ENCODE measurements at regions of chr17 and their contacts with region 1.

Region 1: DNA sequence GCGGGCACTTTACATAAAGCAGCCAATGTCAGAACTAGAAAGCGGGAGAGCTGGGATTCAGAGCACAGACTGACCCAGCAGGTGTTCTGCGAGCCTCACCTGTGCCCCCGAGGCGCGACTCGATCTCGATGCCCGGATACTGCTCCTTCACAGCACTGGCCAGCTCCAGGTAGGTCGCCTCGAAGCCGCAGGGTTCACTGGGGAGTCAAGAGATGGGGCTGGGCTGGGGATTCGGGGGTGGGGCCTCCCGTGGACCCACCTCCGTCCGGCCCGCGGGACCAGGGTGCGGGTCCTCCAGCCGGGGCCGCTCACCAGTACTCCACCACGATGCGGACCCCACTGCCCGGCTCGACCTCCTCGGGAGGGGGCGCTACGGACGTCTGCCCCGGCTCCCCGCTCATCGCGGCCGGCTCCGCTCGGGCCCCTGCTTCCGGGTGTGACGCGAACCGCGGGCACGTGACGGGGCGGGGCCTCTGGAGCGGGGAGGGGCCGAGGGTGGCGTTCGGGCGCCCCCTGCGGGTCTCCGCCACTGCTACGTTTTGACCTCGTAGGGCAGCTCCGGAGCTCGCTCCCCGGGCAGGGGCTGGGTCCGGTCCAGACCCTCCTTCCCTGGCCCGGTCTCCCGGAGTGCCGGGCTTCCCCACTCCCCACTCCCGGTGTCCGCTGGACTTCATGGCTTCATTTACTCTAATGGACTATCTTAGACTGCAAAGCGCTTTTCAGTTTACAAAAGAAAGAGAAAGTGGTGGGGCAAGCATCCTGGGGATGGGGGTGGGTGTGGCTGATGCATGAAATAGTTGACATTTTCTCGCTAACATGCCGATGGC is at the start of gene MIEN1:
- DNase-seq: peak; percentile 95
- ATAC-seq: peak; percentile 94
- H3K4me3 ChIP-seq: peak within 1 kb of the TSS; percentile 63 to 100 (median 78)
- H3K4me3 Mint-ChIP-seq: peak within 1 kb of the TSS; percentile 93
- H3K27ac ChIP-seq: peak within 1 kb of the TSS; percentile 82 to 96
- H3K27ac Mint-ChIP-seq: peak within 1 kb of the TSS; percentile 94
- H3K4me1 ChIP-seq: peaks cover 11 to 17% of the 10 kb centered on the region in 2 donors
- H3K4me1 Mint-ChIP-seq: peaks cover 28% of the 10 kb centered on the region
- H3K27me3 ChIP-seq: no peaks in the 10 kb centered on the region
- H3K27me3 Mint-ChIP-seq: no peaks in the 10 kb centered on the region
- CTCF ChIP-seq: peak; percentile 96
- total RNA-seq, gene MIEN1: 37.9 and 41.1 TPM in 2 replicates

Region 2: DNA sequence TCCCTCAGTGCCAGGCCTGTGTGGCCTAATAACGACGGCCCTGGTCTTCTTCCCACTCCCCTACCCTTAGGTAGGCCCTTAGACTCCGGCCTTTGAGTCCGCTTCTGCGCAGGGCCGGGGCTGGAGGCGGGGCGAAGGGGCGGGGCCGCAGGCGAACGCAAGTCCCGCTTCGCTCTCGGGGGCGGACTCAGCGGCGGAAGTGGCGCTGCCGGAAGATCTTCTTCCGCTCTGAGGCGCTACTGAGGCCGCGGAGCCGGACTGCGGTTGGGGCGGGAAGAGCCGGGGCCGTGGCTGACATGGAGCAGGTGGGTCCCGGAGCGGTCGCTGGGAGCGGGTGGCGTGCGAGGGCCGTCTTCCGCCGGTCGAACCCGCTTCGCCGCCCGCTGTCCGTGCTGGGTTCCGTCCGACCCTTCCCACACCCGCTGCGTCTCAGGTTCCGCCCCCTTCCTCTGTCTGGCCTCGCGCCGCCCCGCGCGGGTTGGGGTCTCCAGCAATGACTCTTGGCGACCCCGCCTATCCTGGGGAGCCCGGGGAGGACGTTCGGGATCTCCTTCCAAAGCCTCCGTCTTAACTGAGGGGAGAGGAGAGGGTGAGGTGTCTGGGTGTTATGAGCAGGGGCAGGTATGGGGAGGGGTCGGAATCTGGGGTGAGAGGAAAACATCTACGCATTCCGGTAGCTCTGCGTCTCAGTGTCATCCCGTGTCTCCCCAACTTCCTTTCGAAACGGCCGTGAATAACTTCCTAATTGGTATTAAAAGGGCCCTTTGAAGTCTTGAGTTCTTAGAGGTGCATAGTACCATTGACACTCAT is 93.2 kb before region 1 on chr17 and contains the start of gene STARD3:
- CTCF ChIA-PET with region 1: interaction called, 18 read pairs
- POLR2A ChIA-PET with region 1: no interaction called
- intact Hi-C with region 1: no loop called
- DNase-seq: peak; percentile 93
- ATAC-seq: peak; percentile 92
- H3K4me3 ChIP-seq: peak within 1 kb of the TSS; percentile 76 to 94 (median 82)
- H3K4me3 Mint-ChIP-seq: peak within 1 kb of the TSS; percentile 95
- H3K27ac ChIP-seq: peak within 1 kb of the TSS; percentile 89 to 90
- H3K27ac Mint-ChIP-seq: peak within 1 kb of the TSS; percentile 91
- H3K4me1 ChIP-seq: peaks cover 49 to 63% of the 10 kb centered on the region in 2 donors
- H3K4me1 Mint-ChIP-seq: peaks cover 60% of the 10 kb centered on the region
- H3K27me3 ChIP-seq: peaks cover 0 to 3% (median 0%) of the 10 kb centered on the region in 4 experiments
- H3K27me3 Mint-ChIP-seq: no peaks in the 10 kb centered on the region
- CTCF ChIP-seq: no peak
- total RNA-seq, gene STARD3: 93.1 and 101 TPM in 2 replicates

Region 3: GRCh38 chr17:39668199-39668966 is 61.9 kb before region 1 on chr17 and contains the start of gene PNMT:
- CTCF ChIA-PET with region 1: interaction called, 28 read pairs
- POLR2A ChIA-PET with region 1: interaction called, 7 read pairs
- intact Hi-C with region 1: no loop called
- DNase-seq: peak; percentile 82
- ATAC-seq: peak; percentile 76
- H3K4me3 ChIP-seq: peak within 1 kb of the TSS in 4 of 5 experiments; percentile 28 to 62 (median 53)
- H3K4me3 Mint-ChIP-seq: peak within 1 kb of the TSS; percentile 75
- H3K27ac ChIP-seq: no peak within 1 kb of the TSS
- H3K27ac Mint-ChIP-seq: peak within 1 kb of the TSS; percentile 7
- H3K4me1 ChIP-seq: peaks cover 24 to 36% of the 10 kb centered on the region in 2 donors
- H3K4me1 Mint-ChIP-seq: peaks cover 27% of the 10 kb centered on the region
- H3K27me3 ChIP-seq: peaks cover 0 to 37% (median 7%) of the 10 kb centered on the region in 4 experiments
- H3K27me3 Mint-ChIP-seq: peaks cover 23% of the 10 kb centered on the region
- CTCF ChIP-seq: peak; percentile 79
- total RNA-seq, gene PNMT: 0.39 and 0.76 TPM in 2 replicates

Region 4: GRCh38 chr17:39777534-39778365 is 47.4 kb after region 1 on chr17:
- CTCF ChIA-PET with region 1: interaction called, 13 read pairs
- POLR2A ChIA-PET with region 1: no interaction called
- intact Hi-C with region 1: no loop called
- DNase-seq: peak; percentile 59
- ATAC-seq: peak; percentile 36
- H3K4me3 ChIP-seq: peak overlapping the region; percentile 17 to 86 (median 51)
- H3K4me3 Mint-ChIP-seq: peak overlapping the region; percentile 89
- H3K27ac ChIP-seq: peak overlapping the region; percentile 33 to 86
- H3K27ac Mint-ChIP-seq: peak overlapping the region; percentile 93
- H3K4me1 ChIP-seq: peaks cover 80 to 90% of the 10 kb centered on the region in 2 donors
- H3K4me1 Mint-ChIP-seq: peaks cover 81% of the 10 kb centered on the region
- H3K27me3 ChIP-seq: no peaks in the 10 kb centered on the region
- H3K27me3 Mint-ChIP-seq: no peaks in the 10 kb centered on the region
- CTCF ChIP-seq: no peak

Region 5: DNA sequence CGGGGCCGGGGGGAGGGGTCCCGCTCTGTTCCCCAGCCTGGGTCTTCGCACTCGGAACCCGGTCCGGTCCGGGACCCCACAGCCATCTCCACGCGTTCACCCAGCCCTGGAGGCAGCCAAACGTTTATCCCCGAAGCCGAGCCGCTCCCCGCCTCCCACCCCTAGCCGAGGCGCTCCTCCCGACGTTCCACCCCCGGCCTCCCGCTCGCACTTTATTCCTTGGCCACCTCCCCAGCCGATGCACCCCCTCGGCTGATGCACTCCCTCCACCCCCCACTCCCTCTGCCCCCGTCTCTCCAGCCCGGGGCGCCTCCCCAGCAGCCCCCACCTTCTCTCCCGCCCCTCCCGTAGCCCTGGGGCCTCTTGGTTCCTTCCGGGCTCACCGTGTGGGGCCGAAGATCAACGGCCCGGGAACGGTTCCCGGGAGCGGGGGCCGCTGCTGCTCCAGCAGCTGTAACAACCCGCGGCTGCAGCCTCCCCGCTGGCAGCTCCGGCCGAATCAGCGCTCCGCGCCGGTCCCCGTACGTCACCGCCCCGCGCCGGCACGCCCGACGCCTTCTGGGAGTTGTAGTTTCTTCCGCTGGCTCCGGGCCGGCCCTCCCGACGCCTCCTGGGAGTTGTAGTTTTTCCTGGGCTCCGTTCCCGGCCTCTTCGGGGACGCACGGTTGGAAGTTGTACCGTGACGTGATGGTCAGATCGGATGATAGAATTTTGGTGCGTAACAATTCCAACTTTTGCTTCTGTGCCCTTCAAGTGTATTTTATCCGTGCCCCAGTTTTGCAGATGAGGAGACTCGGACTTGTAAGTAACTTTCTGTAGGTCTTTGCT is 197.0 kb after region 1 on chr17 and contains the starts of genes LRRC3C and ORMDL3:
- CTCF ChIA-PET with region 1: no interaction called
- POLR2A ChIA-PET with region 1: no interaction called
- intact Hi-C with region 1: loop called (anchors 1 kb)
- DNase-seq: peak; percentile 93
- ATAC-seq: peak; percentile 96
- H3K4me3 ChIP-seq: peak within 1 kb of the TSS; percentile 66 to 93 (median 79)
- H3K4me3 Mint-ChIP-seq: peak within 1 kb of the TSS; percentile 92
- H3K27ac ChIP-seq: peak within 1 kb of the TSS; percentile 46 to 73
- H3K27ac Mint-ChIP-seq: peak within 1 kb of the TSS; percentile 87
- H3K4me1 ChIP-seq: peaks cover 33 to 34% of the 10 kb centered on the region in 2 donors
- H3K4me1 Mint-ChIP-seq: peaks cover 36% of the 10 kb centered on the region
- H3K27me3 ChIP-seq: no peaks in the 10 kb centered on the region
- H3K27me3 Mint-ChIP-seq: no peaks in the 10 kb centered on the region
- CTCF ChIP-seq: no peak
- total RNA-seq, gene LRRC3C: not detected in 2 replicates
- total RNA-seq, gene ORMDL3: 43.4 and 51.8 TPM in 2 replicates

Region 6: DNA sequence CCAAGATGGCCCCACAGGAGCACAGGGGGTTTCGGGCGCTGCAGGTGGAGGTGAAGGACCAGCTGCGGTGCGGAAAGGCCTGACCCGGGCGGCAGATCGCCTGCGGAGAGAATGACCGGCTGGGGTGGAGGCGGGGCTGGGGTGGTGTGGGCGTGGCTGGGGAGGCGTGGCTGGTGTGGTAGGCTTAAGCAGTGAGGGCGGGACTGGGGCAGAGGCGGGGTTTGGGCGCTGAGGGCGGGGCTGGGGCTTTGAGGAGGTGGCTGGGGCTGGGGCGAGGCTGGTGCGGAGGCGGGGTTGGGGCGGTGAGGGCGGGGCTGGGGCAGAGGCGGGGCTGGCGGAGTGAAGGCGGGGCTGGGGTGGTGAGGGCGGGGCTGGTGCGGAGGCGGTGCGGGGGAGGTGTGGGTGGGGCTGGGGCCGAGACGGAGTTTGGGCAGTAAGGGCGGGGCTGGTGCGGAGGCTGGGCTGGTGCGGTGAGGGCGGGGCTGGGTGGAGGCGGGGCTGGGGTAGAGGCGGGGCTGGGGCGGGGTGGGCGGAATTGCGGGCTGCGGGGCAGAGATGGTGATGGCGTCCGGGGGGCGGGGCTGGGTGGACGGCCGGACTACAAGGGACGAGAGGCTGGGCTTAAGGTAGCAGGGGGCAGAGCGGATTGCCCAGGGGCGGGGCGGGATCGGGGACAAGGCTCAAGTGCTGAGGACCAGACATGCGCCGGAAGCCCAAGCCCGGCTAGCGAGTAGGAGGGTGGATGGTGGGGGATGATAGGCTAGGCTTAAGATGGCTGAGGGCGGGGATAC is 222.6 kb after region 1 on chr17:
- CTCF ChIA-PET with region 1: no interaction called
- POLR2A ChIA-PET with region 1: no interaction called
- intact Hi-C with region 1: loop called (anchors 1 kb)
- DNase-seq: peak; percentile 96
- ATAC-seq: peak; percentile 84
- H3K4me3 ChIP-seq: peak overlapping the region in 4 of 5 experiments; percentile 50 to 66 (median 61)
- H3K4me3 Mint-ChIP-seq: peak overlapping the region; percentile 87
- H3K27ac ChIP-seq: peak overlapping the region; percentile 62
- H3K27ac Mint-ChIP-seq: peak overlapping the region; percentile 81
- H3K4me1 ChIP-seq: peaks cover 24 to 38% of the 10 kb centered on the region in 2 donors
- H3K4me1 Mint-ChIP-seq: peaks cover 31% of the 10 kb centered on the region
- H3K27me3 ChIP-seq: no peaks in the 10 kb centered on the region
- H3K27me3 Mint-ChIP-seq: no peaks in the 10 kb centered on the region
- CTCF ChIP-seq: no peak